CD14-positive monocyte (primary cell): ENCODE measurements at regions of chr14 and their contacts with region 1.

Region 1: GRCh38 chr14:85565862-85566296 is 35.9 kb downstream of the FLRT2 start:
- DNase-seq: peak in 1 of 3 donors; percentile 18
- H3K4me3 ChIP-seq: no peak overlapping the region
- H3K4me3 Mint-ChIP-seq: no peak overlapping the region
- H3K27ac ChIP-seq: no peak overlapping the region
- H3K27ac Mint-ChIP-seq: peak overlapping the region in 1 of 7 donors; percentile 4
- H3K4me1 ChIP-seq: no peaks in the 10 kb centered on the region
- H3K4me1 Mint-ChIP-seq: no peaks in the 10 kb centered on the region
- H3K27me3 ChIP-seq: no peaks in the 10 kb centered on the region
- H3K27me3 Mint-ChIP-seq: no peaks in the 10 kb centered on the region
- CTCF ChIP-seq: no peak

Region 2: DNA sequence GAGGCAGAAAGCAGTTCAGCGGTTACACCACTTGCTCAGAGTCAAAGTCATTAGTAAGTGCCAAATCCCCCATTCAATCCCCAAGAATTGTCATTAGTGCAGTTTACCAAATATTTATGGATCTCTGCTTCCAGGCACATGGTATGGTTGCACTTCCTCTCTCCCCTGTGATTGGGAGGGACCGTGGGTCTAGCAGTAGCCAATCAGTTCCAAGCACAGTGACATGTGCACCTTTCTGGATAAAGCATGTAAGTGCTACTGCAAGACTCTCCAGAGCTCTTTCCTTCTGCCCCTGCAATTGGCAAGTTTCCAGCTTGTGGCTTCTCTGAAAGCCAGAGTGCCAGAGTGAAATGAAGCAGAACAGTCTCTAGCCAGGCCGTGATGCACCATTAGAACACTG is 121.2 kb before region 1 on chr14:
- intact Hi-C with region 1: no loop called
- DNase-seq: peak; percentile 5 to 37 (median 31)
- H3K4me3 ChIP-seq: peak overlapping the region in 1 of 3 experiments; percentile 0
- H3K4me3 Mint-ChIP-seq: no peak overlapping the region
- H3K27ac ChIP-seq: peak overlapping the region in 1 of 2 donors; percentile 37
- H3K27ac Mint-ChIP-seq: peak overlapping the region in 2 of 7 donors; percentile 31 to 85
- H3K4me1 ChIP-seq: peaks cover 13 to 33% of the 10 kb centered on the region in 2 donors
- H3K4me1 Mint-ChIP-seq: peaks cover 27% of the 10 kb centered on the region
- H3K27me3 ChIP-seq: no peaks in the 10 kb centered on the region
- H3K27me3 Mint-ChIP-seq: no peaks in the 10 kb centered on the region
- CTCF ChIP-seq: no peak

Region 3: DNA sequence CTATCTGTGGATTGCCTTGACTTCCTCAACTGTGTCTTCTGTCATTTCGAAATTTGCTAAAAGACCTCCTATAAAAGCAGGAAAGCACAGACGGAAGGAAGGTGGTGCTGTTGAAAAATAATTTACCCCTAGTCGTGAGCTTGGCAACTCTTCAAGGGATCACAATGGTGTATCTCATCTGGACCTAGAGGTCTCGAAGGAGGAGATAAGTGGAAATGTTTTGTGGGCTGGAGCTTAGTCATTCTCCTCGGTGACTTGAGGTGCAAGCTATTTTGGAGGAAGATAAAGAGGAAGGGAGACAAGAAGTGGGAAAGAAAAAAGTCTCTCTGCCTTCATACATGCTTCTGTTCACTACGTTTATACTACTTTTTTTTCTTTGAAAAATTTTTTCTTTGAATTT is 54.0 kb after region 1 on chr14:
- intact Hi-C with region 1: loop called in 1 of 2 experiments (anchors 10 kb)
- DNase-seq: peak in 2 of 3 donors; percentile 36 to 44
- H3K4me3 ChIP-seq: peak overlapping the region in 2 of 3 experiments; percentile 25 to 62
- H3K4me3 Mint-ChIP-seq: peak overlapping the region; percentile 49 to 79
- H3K27ac ChIP-seq: peak overlapping the region in 1 of 2 donors; percentile 36
- H3K27ac Mint-ChIP-seq: peak overlapping the region in 6 of 7 donors; percentile 2 to 77 (median 68)
- H3K4me1 ChIP-seq: peaks cover 17 to 26% of the 10 kb centered on the region in 2 donors
- H3K4me1 Mint-ChIP-seq: peaks cover 14% of the 10 kb centered on the region
- H3K27me3 ChIP-seq: peaks cover 0 to 2% of the 10 kb centered on the region in 2 donors
- H3K27me3 Mint-ChIP-seq: peaks cover 7 to 10% (median 10%) of the 10 kb centered on the region in 3 donors
- CTCF ChIP-seq: no peak